Activated CD8-positive, alpha-beta T cell treated with anti-CD3 and anti-CD28 coated beads for 36 hours (primary cell): ENCODE measurements at regions of chr1 and their contacts with region 1.

Region 1: DNA sequence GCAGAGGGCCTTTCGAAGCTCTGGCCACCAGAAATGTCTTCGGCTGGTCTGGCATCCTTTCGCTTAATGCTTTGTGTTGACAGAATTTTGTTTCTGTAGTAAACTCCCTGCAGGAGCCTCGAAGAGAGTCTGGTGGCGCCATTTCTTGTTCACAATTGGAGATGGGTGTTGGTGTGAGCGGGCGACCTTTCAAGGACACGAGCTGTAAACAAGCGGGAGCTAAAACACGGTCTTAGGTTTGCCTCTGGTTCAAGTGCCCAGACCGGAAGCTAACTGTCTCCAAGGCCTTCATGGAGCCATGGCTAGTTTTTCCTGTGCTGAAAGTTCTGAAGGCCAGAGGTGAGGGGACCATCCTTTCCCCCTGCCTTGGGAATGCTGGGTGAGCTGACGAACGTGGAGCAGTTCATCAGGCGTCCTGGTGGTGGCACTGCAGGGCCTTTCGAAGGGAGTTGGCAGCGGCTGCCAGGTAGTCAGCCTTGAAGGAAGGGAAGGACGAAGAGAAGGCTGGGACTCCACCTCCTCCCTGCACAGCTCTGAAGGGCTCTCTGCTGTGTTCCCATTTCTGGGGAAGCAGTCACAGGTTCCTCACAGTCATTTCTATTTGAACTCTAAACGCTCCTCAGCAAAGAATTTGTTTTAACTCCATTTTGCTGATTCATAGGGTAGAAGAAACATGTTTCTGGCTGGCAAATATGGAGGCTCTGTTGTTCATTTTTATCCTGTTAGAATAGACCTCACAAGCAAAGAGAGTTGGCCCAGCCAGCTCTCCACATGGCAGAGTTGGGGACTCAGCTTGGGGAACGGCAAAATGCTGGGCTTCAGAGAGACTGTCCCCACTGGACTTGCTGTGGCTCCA is 35.2 kb downstream of the URB2 start:
- DNase-seq: peak; percentile 76
- ATAC-seq: peak; percentile 78
- H3K4me3 Mint-ChIP-seq: no peak overlapping the region
- H3K27ac Mint-ChIP-seq: no peak overlapping the region
- H3K4me1 Mint-ChIP-seq: peaks cover 15% of the 10 kb centered on the region
- H3K27me3 Mint-ChIP-seq: no peaks in the 10 kb centered on the region
- CTCF ChIP-seq: peak; percentile 92

Region 2: DNA sequence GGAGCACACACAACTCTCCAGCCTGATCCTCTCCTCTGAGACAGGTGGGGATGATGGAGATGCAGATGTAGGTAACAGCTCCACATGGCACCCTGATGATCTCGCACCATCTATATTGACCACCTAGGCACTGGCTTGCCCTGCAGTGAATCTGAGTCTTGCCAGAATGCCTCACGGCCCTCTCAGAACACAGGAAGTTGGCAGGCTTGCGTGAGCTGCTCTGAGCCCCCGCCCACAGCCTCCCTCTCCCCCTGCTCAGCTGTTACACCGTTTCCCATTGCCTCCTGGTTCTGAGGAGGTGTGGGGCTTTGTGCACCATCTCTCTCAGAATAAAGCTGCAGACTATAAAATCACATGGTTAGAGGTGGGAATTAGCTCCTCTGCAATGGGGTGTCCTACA is 12.8 kb after region 1 on chr1:
- CTCF ChIA-PET with region 1: interaction called, 11 read pairs
- POLR2A ChIA-PET with region 1: interaction called, 3 read pairs
- intact Hi-C with region 1: no loop called
- DNase-seq: peak; percentile 53
- ATAC-seq: peak; percentile 69
- H3K4me3 Mint-ChIP-seq: no peak overlapping the region
- H3K27ac Mint-ChIP-seq: no peak overlapping the region
- H3K4me1 Mint-ChIP-seq: peaks cover 17% of the 10 kb centered on the region
- H3K27me3 Mint-ChIP-seq: no peaks in the 10 kb centered on the region
- CTCF ChIP-seq: no peak

Region 3: DNA sequence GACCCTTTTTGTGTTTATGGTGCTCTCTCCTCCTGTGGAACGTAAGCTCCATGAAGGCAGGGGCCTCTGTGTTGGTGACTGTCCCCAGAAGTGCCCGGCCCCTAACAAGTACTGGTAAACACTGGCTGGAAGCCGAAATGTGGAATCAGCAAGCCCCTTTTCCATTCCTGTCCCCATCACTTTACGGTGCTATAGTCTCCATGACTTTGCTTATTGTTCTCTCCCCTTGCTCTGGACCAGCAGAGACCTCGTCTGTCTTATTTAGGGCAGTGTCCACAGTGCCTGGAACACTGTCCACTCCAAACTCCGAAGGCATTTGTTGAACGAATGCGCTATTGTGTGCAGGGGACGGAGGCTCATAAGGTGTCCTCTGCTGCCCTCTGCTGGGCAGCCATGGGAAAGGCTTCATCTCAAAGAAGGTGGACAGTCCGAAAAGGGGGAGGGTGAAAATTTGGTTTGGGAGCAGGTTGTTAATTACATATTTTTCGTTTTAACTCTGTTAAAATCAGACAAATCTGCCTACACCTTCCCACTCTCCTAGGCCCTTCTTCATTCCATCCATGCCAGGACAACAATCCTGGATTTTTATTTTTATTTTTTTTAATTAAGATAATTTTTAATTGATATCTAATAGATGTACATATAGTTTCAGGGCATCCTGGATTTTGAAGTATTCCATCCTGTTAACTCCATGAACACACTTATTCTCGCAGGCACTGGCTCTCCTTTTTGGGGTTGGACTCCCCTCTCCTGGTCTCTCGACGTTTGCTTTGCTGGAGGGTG is 649.3 kb after region 1 on chr1:
- CTCF ChIA-PET with region 1: interaction called, 14 read pairs
- POLR2A ChIA-PET with region 1: no interaction called
- intact Hi-C with region 1: loop called (anchors 1 kb)
- DNase-seq: peak; percentile 78
- ATAC-seq: peak; percentile 61
- H3K4me3 Mint-ChIP-seq: no peak overlapping the region
- H3K27ac Mint-ChIP-seq: no peak overlapping the region
- H3K4me1 Mint-ChIP-seq: peaks cover 4% of the 10 kb centered on the region
- H3K27me3 Mint-ChIP-seq: peaks cover 8% of the 10 kb centered on the region
- CTCF ChIP-seq: peak; percentile 93